ENCODE measurements at regions of chr3 and their contacts with region 1.

Region 1: GRCh38 chr3:56023546-56023945 is 444.7 kb downstream of the ERC2 start:
- DNase-seq: no peak
- H3K4me3 ChIP-seq: no peak overlapping the region
- H3K27ac ChIP-seq: no peak overlapping the region
- H3K4me1 ChIP-seq: no peaks in the 10 kb centered on the region
- H3K27me3 ChIP-seq: no peaks in the 10 kb centered on the region
- CTCF ChIP-seq: no peak
- POLR2A ChIP-seq: no peak

Region 2: DNA sequence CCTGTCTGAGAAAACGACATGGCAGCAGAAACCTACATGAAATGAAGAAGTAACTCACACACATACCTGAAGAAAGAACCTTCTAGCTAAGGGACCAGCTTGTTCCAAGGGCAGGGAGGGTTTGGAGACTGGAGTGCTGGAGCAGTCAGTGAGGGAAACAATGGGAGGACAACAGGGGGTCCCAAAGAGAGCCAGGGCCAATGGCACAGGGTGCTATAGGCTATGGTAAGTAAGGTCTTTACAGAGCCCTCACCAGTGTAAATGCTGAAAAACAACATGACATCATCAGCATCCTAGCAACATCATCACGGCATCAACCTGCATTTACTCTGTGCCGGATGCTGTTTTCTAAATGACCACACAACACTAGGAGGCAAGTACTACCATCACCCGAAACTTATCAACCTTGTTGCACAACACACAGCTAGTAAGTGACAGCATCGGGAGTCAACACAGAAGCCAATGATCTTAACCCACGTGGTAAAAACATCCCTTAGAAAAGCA is 86.9 kb before region 1 on chr3:
- CTCF ChIA-PET with region 1: no interaction called
- POLR2A ChIA-PET with region 1: interaction called, 11 read pairs
- dilution Hi-C with region 1: no loop called
- intact Hi-C with region 1: no loop called
- DNase-seq: no peak
- H3K4me3 ChIP-seq: no peak overlapping the region
- H3K27ac ChIP-seq: no peak overlapping the region
- H3K4me1 ChIP-seq: no peaks in the 10 kb centered on the region
- H3K27me3 ChIP-seq: no peaks in the 10 kb centered on the region
- CTCF ChIP-seq: no peak
- POLR2A ChIP-seq: no peak